ENCODE measurements at regions of chr14 and their contacts with region 1.

Region 1: DNA sequence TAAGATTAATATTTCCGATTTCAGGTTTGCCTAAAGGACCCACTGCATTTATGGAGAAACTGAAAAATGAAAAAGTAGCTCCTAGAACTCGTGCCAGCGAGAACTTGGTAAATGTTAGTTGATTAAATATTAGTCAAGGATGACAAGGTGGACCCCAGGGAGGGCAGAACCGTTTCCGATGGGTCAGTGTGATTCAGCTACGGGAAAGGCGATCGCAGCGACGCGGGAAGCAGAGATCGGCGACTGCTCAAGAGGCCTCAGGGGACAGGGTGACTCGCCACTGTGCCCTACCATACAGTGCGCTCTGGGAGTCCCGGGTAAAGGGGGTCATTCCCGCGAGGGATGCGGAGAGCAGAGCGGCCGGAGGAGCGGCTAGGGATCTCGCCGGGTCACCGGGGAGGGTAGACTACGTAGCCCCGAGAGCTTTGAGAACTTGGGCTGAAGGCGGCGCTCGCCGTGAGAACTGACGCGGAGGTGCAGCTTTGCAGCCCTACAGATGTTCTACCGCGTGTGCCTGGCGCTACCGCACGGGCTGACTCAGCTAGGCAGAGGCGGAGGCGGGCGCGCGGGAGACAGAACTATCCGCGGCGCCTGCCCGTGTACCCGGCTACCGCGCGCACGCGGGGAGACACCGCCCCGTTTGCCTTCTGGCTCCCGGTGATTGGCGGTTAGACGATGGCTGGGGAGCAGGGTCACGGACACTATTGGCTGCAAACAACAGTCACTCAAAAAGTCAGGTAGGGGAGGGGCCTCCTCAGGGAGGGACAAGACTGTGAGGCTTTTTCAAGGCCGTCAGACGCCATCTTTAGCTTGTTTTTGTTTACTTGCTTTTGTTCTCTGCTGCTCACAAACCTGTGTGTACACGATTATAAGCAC is 3.2 kb downstream of the C14orf93 start:
- DNase-seq: peak; percentile 92 to 99 (median 96)
- ATAC-seq: peak; percentile 94
- H3K4me3 ChIP-seq: peak overlapping the region; percentile 80
- H3K4me3 Mint-ChIP-seq: peak overlapping the region; percentile 95
- H3K27ac ChIP-seq: peak overlapping the region; percentile 83 to 84
- H3K27ac Mint-ChIP-seq: peak overlapping the region; percentile 93
- H3K4me1 ChIP-seq: peaks cover 26% of the 10 kb centered on the region
- H3K4me1 Mint-ChIP-seq: peaks cover 52% of the 10 kb centered on the region
- H3K27me3 ChIP-seq: no peaks in the 10 kb centered on the region
- H3K27me3 Mint-ChIP-seq: no peaks in the 10 kb centered on the region
- CTCF ChIP-seq: peak; percentile 60

Region 2: DNA sequence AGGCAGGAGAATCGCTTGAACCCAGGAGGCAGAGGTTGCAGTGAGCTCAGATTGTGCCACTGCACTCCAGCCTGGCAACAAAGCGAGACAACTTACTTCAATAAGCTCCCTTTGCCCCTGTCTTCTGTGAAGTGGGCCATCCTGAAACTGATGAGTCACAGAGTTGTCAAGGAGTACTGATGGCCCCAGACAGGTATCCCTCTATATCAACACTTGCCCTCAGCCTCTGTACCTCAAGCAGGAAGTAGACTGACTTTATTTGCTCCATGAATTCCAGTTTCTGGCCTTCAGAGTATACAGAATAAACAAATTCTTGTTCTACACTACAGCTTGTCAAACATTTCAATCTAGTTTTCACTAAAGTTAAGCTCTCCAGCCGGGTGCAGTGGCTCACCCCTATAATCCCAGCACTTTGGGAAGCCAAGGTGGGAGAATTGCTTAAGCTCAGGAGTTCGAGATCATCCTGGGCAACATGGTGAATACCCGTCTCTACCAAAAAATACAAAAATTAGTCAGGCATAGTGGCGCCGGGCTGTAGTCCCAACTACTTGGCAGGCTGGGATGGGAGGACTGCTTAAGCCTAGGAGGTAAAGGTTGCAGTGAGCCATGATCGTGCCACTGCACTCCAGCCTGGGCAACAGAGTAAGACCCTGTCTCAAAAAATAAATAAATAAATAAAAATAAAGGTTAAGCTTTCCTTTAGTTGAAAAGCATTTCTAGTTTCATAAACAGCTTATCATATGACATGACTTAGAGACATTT is 151.6 kb before region 1 on chr14:
- CTCF ChIA-PET with region 1: no interaction called
- POLR2A ChIA-PET with region 1: no interaction called
- intact Hi-C with region 1: no loop called
- DNase-seq: no peak
- ATAC-seq: no peak
- H3K4me3 ChIP-seq: no peak overlapping the region
- H3K4me3 Mint-ChIP-seq: no peak overlapping the region
- H3K27ac ChIP-seq: no peak overlapping the region
- H3K27ac Mint-ChIP-seq: no peak overlapping the region
- H3K4me1 ChIP-seq: peaks cover 32% of the 10 kb centered on the region
- H3K4me1 Mint-ChIP-seq: peaks cover 36% of the 10 kb centered on the region
- H3K27me3 ChIP-seq: no peaks in the 10 kb centered on the region
- H3K27me3 Mint-ChIP-seq: peaks cover 5% of the 10 kb centered on the region
- CTCF ChIP-seq: no peak

Region 3: DNA sequence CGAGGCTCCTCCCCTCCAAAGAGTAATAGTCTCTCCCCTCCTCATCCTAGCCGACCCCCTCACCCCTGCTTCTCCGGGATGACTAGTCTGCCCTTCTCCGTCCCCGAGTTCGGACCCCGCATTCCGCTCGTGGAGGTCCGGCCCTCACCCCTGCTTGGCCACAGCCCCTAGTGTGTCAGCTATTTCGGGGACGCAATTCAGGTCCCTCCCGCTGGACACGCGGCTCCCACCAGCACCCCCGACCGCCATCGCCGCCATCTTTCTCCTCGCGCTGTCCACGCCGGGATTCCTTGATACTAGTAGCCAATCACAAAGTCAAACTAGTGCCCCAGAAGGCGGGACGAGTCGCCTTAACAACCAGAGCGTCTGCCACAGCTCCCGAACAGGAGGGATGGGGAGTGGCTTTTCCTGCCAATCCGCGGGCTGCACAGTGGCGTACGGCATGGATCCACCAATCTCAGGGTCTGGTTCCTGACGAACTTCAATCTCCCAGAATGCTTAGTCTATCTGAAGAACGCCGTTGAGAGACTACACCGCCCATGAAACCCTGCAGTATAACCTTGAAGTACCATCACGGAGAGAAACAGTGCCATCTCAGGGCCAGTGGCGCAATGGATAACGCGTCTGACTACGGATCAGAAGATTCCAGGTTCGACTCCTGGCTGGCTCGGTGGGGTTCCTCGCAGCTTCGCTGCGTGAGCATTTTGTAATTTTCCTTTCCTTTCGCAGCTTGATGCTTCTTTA is 77.5 kb before region 1 on chr14 and contains the start of gene PRMT5:
- CTCF ChIA-PET with region 1: interaction called, 9 read pairs
- POLR2A ChIA-PET with region 1: interaction called, 23 read pairs
- intact Hi-C with region 1: no loop called
- DNase-seq: peak; percentile 93 to 100 (median 97)
- ATAC-seq: peak; percentile 96
- H3K4me3 ChIP-seq: peak within 1 kb of the TSS; percentile 91
- H3K4me3 Mint-ChIP-seq: no peak within 1 kb of the TSS
- H3K27ac ChIP-seq: peak within 1 kb of the TSS; percentile 79 to 88
- H3K27ac Mint-ChIP-seq: no peak within 1 kb of the TSS
- H3K4me1 ChIP-seq: peaks cover 30% of the 10 kb centered on the region
- H3K4me1 Mint-ChIP-seq: peaks cover 11% of the 10 kb centered on the region
- H3K27me3 ChIP-seq: no peaks in the 10 kb centered on the region
- H3K27me3 Mint-ChIP-seq: no peaks in the 10 kb centered on the region
- CTCF ChIP-seq: no peak
- total RNA-seq, gene PRMT5: 15.6 to 19.3 TPM

Region 4: DNA sequence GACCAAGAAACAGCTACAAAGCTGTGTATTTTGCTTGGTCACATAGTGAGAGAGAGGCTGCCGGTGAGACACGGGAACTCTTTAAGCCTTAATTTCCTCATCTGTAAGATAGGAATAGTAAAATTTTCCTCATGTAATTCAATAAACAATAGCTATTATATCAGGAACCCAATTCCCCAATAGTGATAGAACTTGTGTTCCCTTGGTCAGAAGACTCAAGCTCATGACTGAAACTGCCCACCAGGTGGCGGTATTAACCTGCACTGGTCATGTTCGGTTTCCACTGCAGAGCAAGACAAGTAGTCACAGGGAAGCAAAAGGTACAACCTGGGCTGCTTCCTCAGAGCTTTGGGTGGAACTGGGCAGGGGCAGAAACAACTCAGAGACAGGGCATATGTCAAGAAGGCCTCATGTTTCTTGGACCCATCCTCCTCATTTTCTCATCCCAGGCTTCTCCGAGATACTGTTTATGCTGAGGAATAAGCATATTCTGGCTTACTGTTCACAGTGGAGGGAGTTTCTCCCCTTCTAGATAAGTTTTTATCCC is 20.2 kb before region 1 on chr14:
- CTCF ChIA-PET with region 1: interaction called, 37 read pairs
- POLR2A ChIA-PET with region 1: interaction called, 23 read pairs
- intact Hi-C with region 1: loop called in 1 of 2 experiments (anchors 2 kb)
- DNase-seq: peak; percentile 81 to 96 (median 88)
- ATAC-seq: peak; percentile 67
- H3K4me3 ChIP-seq: no peak overlapping the region
- H3K4me3 Mint-ChIP-seq: peak overlapping the region; percentile 3
- H3K27ac ChIP-seq: no peak overlapping the region
- H3K27ac Mint-ChIP-seq: no peak overlapping the region
- H3K4me1 ChIP-seq: peaks cover 17% of the 10 kb centered on the region
- H3K4me1 Mint-ChIP-seq: peaks cover 3% of the 10 kb centered on the region
- H3K27me3 ChIP-seq: peaks cover 0 to 5% of the 10 kb centered on the region in 2 experiments
- H3K27me3 Mint-ChIP-seq: no peaks in the 10 kb centered on the region
- CTCF ChIP-seq: peak; percentile 95

Region 5: GRCh38 chr14:23025151-23025814 is 18.5 kb after region 1 on chr14:
- CTCF ChIA-PET with region 1: interaction called, 13 read pairs
- POLR2A ChIA-PET with region 1: interaction called, 71 read pairs
- intact Hi-C with region 1: loop called in 1 of 2 experiments (anchors 1 kb)
- DNase-seq: peak in 1 of 14 experiments; percentile 45
- ATAC-seq: no peak
- H3K4me3 ChIP-seq: no peak overlapping the region
- H3K4me3 Mint-ChIP-seq: peak overlapping the region; percentile 22
- H3K27ac ChIP-seq: peak overlapping the region; percentile 3 to 15
- H3K27ac Mint-ChIP-seq: peak overlapping the region; percentile 67
- H3K4me1 ChIP-seq: peaks cover 59% of the 10 kb centered on the region
- H3K4me1 Mint-ChIP-seq: peaks cover 79% of the 10 kb centered on the region
- H3K27me3 ChIP-seq: no peaks in the 10 kb centered on the region
- H3K27me3 Mint-ChIP-seq: no peaks in the 10 kb centered on the region
- CTCF ChIP-seq: no peak

Region 6: GRCh38 chr14:23057757-23058653 is 51.2 kb after region 1 on chr14:
- CTCF ChIA-PET with region 1: interaction called, 42 read pairs
- POLR2A ChIA-PET with region 1: interaction called, 38 read pairs
- intact Hi-C with region 1: loop called in 1 of 2 experiments (anchors 1 kb)
- DNase-seq: peak; percentile 74 to 94 (median 86)
- ATAC-seq: peak; percentile 73
- H3K4me3 ChIP-seq: peak overlapping the region; percentile 75
- H3K4me3 Mint-ChIP-seq: peak overlapping the region; percentile 90
- H3K27ac ChIP-seq: no peak overlapping the region
- H3K27ac Mint-ChIP-seq: peak overlapping the region; percentile 63
- H3K4me1 ChIP-seq: peaks cover 24% of the 10 kb centered on the region
- H3K4me1 Mint-ChIP-seq: peaks cover 18% of the 10 kb centered on the region
- H3K27me3 ChIP-seq: no peaks in the 10 kb centered on the region
- H3K27me3 Mint-ChIP-seq: no peaks in the 10 kb centered on the region
- CTCF ChIP-seq: peak; percentile 91